Heart left ventricle (tissue), 16 donors: ENCODE measurements at regions of chr1 and their contacts with region 1.

Region 1: DNA sequence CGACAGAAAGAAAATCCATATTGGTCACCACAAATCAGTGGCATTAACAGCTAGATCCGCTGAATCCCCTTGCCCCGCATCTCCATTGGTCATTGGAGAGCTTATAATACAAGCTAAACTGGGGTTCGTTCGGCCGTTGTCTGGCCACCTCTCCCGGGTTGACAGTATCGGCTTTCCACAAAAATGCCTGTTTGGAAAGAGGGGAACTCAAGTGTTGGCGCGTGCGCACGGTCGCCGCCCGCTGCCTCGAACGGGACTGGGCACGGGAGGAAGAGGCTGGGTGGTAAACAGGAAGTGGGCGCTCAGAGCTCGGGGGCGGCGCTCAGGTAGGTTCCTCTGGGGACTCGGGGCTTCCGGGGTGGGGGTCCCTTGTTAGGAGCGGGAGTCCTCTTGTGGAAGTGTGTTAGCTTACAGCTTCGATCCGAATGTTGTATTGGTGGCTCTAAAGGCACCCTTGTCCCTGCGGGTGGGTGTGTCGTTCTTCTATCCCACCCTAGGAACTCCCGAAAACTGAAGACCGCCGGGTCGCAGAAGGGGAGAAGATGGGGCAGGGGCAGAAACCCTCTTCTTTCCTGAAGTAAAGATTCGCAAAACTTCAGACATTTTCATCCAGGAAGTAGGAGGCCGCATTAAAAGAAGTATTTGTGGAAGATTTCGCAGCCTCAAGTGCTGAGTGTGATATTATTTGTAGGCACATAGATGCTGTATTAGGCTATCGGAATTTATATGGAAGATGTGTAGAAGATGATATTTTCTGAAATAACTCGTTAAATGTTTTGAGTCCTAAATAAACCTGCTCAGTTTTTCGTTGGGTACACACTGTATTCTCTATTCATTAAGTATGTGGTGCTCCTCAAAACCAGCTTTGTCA is 962 bp downstream of the BROX start:
- DNase-seq: peak; percentile 93 to 95 (median 95)
- ATAC-seq: peak; percentile 88 to 93 (median 90)
- H3K4me3 ChIP-seq: peak overlapping the region; percentile 50 to 96 (median 77)
- H3K27ac ChIP-seq: peak overlapping the region; percentile 93 to 100 (median 98)
- H3K4me1 ChIP-seq: peaks cover 0 to 38% (median 30%) of the 10 kb centered on the region in 12 donors
- H3K27me3 ChIP-seq: no peaks in the 10 kb centered on the region
- CTCF ChIP-seq: no peak
- POLR2A ChIP-seq: peak in 1 of 2 donors; percentile 37

Region 2: GRCh38 chr1:222643938-222644635 is 69.2 kb before region 1 on chr1:
- intact Hi-C with region 1: loop called in 5 of 10 experiments (anchors 2 to 10 kb)
- DNase-seq: peak; percentile 97 to 99 (median 98)
- ATAC-seq: peak; percentile 100
- H3K4me3 ChIP-seq: peak overlapping the region; percentile 58 to 94 (median 80)
- H3K27ac ChIP-seq: peak overlapping the region; percentile 86 to 99 (median 96)
- H3K4me1 ChIP-seq: peaks cover 0 to 21% (median 12%) of the 10 kb centered on the region in 12 donors
- H3K27me3 ChIP-seq: no peaks in the 10 kb centered on the region
- CTCF ChIP-seq: peak in 1 of 12 donors; percentile 11
- POLR2A ChIP-seq: peak in 1 of 2 donors; percentile 71

Region 3: GRCh38 chr1:222732216-222733159 is 19.2 kb after region 1 on chr1:
- intact Hi-C with region 1: loop called in 1 of 10 experiments (anchors 1 kb)
- DNase-seq: no peak
- ATAC-seq: no peak
- H3K4me3 ChIP-seq: no peak overlapping the region
- H3K27ac ChIP-seq: no peak overlapping the region
- H3K4me1 ChIP-seq: peaks cover 0 to 8% (median 0%) of the 10 kb centered on the region in 12 donors
- H3K27me3 ChIP-seq: no peaks in the 10 kb centered on the region
- CTCF ChIP-seq: no peak
- POLR2A ChIP-seq: no peak